ENCODE measurements at regions of chr3 and their contacts with region 1.

Region 1: DNA sequence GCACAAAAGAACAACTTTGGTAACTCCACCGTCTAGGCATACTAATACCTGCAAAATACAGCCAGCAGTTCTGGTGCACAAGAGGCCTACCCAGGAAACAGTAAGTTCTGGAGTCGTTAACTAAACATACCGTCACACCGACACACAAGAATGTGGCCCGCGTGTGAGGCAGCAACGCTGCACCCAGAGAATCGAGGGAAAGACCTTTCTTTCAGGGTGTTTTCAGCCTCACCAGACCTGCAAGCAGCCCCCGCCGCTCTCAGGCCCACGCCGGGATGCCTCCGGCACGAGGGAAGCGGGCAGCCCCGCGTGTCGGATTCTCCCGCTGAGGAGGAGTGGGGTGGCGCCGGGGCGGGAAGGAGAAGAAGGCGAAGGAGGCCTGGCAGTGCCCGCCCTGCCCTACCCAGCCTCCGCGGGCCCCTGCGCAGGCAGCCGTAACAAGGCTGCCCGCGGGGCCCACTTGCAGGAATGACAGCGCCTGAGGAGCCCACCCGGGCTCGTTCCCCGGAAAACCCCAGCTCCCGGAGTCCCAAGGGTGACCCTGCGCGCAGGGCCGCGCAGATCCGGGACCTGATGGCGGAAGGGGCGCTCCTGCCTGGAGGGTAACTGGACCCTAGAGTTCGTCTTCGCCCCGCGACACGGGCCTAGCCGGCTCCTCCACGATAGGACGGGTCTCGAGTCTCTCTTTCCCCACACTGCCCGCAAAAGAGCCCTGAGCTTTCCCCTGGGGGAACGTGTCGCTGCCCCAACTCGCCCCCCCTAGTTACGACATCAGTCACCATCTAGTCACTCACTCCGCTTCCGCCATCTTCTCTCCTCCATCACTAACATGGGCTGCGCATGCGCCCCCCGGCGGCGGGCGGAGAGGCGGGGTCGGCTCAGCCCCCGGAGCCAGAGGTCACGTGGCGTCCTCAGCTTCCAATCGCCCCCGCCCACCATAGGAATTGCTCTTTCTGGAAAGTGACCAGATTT is at the start of gene PHC3:
- DNase-seq: peak; percentile 93
- H3K4me3 Mint-ChIP-seq: peak within 1 kb of the TSS; percentile 97
- H3K27ac Mint-ChIP-seq: peak within 1 kb of the TSS; percentile 100
- H3K4me1 Mint-ChIP-seq: peaks cover 23% of the 10 kb centered on the region
- H3K27me3 Mint-ChIP-seq: no peaks in the 10 kb centered on the region
- total RNA-seq, gene PHC3: 48.7 to 50.4 TPM

Region 2: GRCh38 chr3:169812332-169813235 is 368.6 kb before region 1 on chr3 and contains the starts of genes LRRC34 and LRRIQ4:
- CTCF ChIA-PET with region 1: no interaction called
- intact Hi-C with region 1: loop called (anchors 2 kb)
- DNase-seq: peak; percentile 91
- H3K4me3 Mint-ChIP-seq: peak within 1 kb of the TSS; percentile 82
- H3K27ac Mint-ChIP-seq: peak within 1 kb of the TSS; percentile 79
- H3K4me1 Mint-ChIP-seq: peaks cover 19% of the 10 kb centered on the region
- H3K27me3 Mint-ChIP-seq: no peaks in the 10 kb centered on the region
- total RNA-seq, gene LRRC34: 3.8 to 3.9 TPM
- total RNA-seq, gene LRRIQ4: 0.12 TPM in 1 of 2 experiments, not detected in the other

Region 3: GRCh38 chr3:170098753-170099152 is 82.4 kb before region 1 on chr3:
- CTCF ChIA-PET with region 1: no interaction called
- intact Hi-C with region 1: loop called (anchors 1 kb)
- DNase-seq: no peak
- H3K4me3 Mint-ChIP-seq: peak overlapping the region; percentile 2
- H3K27ac Mint-ChIP-seq: peak overlapping the region; percentile 95
- H3K4me1 Mint-ChIP-seq: peaks cover 59% of the 10 kb centered on the region
- H3K27me3 Mint-ChIP-seq: no peaks in the 10 kb centered on the region

Region 4: DNA sequence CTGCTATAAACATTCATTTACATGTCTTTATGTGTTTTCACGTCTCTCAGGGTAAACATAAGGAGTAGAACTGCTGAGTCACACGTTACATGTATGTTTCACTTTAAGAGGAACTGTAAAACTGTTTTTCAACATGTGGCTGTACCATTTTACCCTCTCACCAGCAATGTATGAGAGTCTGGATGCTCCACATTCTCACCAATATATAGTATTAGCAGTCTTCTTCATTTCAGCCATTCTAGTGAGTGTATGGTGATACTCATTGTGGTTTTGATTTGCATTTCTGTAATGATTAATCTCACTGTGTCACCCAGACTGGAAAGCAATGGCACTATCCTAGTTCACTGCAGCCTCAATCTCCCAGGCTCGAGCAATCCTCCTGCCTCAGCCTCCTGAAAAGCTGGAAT is 36.8 kb before region 1 on chr3:
- CTCF ChIA-PET with region 1: no interaction called
- intact Hi-C with region 1: loop called (anchors 2 kb)
- DNase-seq: no peak
- H3K4me3 Mint-ChIP-seq: no peak overlapping the region
- H3K27ac Mint-ChIP-seq: peak overlapping the region; percentile 71
- H3K4me1 Mint-ChIP-seq: peaks cover 34% of the 10 kb centered on the region
- H3K27me3 Mint-ChIP-seq: no peaks in the 10 kb centered on the region

Measured in activated naive CD4-positive, alpha-beta T cell treated with anti-CD3 and anti-CD28 coated beads for 36 hours (primary cell).